Psoas muscle (tissue), 8 donors: ENCODE measurements at regions of chr3 and their contacts with region 1.

Region 1: DNA sequence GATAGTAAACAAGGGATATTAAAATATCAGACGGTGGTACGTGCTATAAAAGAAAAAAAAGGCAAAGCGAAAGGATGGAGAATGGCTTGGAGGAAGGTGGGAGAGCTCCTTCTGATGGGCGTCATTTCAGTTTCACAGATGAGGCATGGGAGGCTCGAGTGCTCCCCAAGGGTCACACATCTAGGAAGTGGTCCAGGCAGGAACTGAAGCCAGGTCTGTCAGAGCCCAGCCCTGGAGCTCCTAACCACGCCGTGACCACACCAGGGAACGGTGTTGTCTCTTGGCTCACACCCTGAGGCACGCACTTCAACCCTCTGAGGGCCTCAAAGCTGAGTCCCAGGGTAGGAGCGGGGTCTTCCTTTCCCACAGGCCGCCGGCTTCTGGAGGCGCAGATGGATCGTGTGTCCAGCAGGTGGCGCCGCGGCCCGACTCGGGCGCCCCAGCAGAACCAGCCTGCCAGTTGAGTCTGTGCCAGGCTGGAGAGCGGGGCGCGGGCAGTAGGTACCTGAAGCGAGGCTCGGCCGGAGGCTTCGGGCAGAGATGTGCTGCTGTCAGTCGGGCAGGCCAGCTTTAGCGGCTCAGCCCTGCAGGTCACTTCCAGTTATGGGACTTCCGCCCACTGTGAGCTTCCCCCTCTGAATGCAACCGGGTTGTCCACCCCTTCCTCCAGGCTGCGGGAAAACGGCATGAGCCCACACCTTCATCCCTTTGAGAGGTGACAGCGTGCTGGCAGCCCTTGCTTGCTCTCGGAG is 68.1 kb downstream of the SLC6A1 start:
- DNase-seq: peak; percentile 73 to 74
- ATAC-seq: peak; percentile 42 to 82 (median 74)
- H3K4me3 ChIP-seq: peak overlapping the region; percentile 5
- H3K27ac ChIP-seq: no peak overlapping the region
- H3K4me1 ChIP-seq: no peaks in the 10 kb centered on the region
- H3K27me3 ChIP-seq: peaks cover 0 to 40% (median 2%) of the 10 kb centered on the region in 3 donors
- CTCF ChIP-seq: peak; percentile 75

Region 2: GRCh38 chr3:10758304-10759061 is 302.2 kb before region 1 on chr3:
- intact Hi-C with region 1: loop called in 1 of 2 experiments (anchors 2 kb)
- DNase-seq: peak; percentile 31 to 63
- ATAC-seq: peak; percentile 77 to 89 (median 84)
- H3K4me3 ChIP-seq: no peak overlapping the region
- H3K27ac ChIP-seq: no peak overlapping the region
- H3K4me1 ChIP-seq: no peaks in the 10 kb centered on the region
- H3K27me3 ChIP-seq: peaks cover 0 to 24% (median 7%) of the 10 kb centered on the region in 3 donors
- CTCF ChIP-seq: peak; percentile 61

Region 3: DNA sequence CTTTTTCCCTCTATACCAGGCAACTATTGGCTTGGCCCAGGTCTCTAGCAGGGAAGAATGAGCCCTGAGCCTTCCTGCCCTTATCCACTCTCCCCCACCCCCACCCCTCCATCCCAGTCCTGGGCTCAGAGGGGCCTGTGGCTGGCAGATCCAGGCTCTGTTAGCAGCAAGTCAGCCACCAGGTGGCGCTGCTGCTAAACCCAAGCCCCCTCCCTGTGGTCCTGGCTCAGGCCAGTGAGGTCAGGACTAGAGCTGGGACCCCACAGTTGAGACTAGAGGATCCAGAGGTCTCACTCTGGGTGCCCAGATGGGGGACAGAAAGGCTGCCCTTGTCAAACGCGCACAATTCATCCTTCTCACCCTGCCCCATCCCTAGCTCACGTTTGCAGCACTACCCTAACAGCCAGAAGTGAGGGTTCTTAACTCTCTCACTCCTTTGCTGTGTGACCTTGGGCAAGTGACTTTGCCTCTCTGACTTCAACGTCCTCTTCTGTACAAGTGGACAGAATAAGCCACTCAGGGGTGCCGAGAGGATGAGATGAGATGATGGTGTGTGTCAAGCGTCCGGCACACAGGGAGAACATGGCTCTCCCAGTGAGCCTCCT is 114.9 kb before region 1 on chr3:
- intact Hi-C with region 1: loop called (anchors 1 to 2 kb)
- DNase-seq: peak; percentile 68 to 80
- ATAC-seq: peak; percentile 61 to 89 (median 88)
- H3K4me3 ChIP-seq: no peak overlapping the region
- H3K27ac ChIP-seq: no peak overlapping the region
- H3K4me1 ChIP-seq: no peaks in the 10 kb centered on the region
- H3K27me3 ChIP-seq: peaks cover 0 to 4% (median 0%) of the 10 kb centered on the region in 3 donors
- CTCF ChIP-seq: peak; percentile 81

Region 4: GRCh38 chr3:11201246-11202024 is 140.8 kb after region 1 on chr3:
- intact Hi-C with region 1: loop called in 1 of 2 experiments (anchors 10 kb)
- DNase-seq: no peak
- ATAC-seq: peak in 3 of 4 donors; percentile 27 to 62 (median 52)
- H3K4me3 ChIP-seq: no peak overlapping the region
- H3K27ac ChIP-seq: no peak overlapping the region
- H3K4me1 ChIP-seq: no peaks in the 10 kb centered on the region
- H3K27me3 ChIP-seq: no peaks in the 10 kb centered on the region
- CTCF ChIP-seq: no peak

Region 5: DNA sequence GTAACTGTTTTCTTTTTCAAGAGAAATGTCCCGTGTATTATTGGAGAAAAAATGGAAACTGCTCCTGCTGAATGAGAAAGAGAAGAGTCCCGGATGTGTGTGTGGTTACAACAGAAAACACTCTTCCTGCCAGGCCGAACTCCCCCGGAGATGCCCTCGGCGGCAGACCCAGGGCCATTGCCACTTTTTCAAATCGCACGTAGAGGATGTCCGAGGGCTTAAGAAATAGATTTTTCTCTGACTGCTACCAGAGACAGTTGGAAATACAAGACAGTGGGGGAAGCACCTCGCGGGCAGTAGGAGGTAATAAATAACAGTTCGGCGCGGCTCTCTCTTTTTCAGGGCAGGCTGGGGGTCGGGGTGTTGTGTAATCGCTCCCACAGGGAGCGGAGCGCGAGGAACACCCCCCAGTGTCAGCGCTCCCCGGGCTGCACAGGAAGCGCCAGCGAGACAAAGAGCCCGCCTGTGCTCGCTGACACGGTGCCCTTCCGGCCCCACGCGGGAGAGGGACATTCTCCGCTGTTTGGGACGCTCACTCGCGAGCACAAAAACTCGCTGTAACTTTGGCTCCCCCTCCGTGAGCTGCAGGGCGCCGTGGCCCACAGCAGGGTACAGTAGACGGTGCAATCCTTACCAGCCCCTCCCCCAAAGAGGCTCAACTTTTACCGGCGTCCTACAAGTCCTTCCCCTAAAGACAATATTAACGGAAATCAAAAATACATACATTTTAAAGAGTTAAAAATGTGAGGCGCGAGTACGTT is 581.9 kb after region 1 on chr3:
- intact Hi-C with region 1: no loop called
- DNase-seq: peak; percentile 83 to 93
- ATAC-seq: peak; percentile 79 to 83 (median 80)
- H3K4me3 ChIP-seq: peak overlapping the region; percentile 76
- H3K27ac ChIP-seq: peak overlapping the region; percentile 98
- H3K4me1 ChIP-seq: peaks cover 38% of the 10 kb centered on the region
- H3K27me3 ChIP-seq: no peaks in the 10 kb centered on the region
- CTCF ChIP-seq: no peak